ENCODE measurements at regions of chr7 and their contacts with region 1.

Region 1: DNA sequence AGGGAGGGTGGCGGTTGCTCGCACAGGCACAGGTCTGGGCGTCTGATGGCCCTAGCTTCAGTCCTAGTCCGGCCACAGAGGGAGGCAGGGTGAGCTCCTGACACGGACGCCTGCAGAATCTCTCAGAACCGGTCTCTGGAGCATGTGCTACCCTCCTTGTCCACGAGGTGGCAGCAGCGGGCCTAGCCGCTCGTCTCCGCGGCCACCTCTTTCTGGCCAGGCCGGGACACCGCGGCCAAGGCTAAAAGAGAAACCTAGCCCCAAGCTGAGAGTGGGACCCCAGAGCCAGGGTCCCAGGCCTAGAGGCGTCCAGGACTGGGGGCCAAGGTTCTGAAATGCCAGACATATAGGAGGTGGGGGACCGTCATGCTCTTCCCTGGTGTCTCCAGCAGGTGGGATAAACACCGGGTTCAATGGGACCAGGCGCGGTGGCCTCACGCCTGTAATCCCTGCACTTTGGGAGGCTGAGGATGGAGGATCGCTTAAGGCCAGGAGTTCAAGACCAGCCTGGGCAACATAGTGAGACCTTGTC is 3.2 kb upstream of the LAT2 start:
- DNase-seq: peak; percentile 46 to 91
- H3K4me3 ChIP-seq: no peak overlapping the region
- H3K27ac ChIP-seq: no peak overlapping the region
- H3K4me1 ChIP-seq: peaks cover 14% of the 10 kb centered on the region
- H3K27me3 ChIP-seq: no peaks in the 10 kb centered on the region
- CTCF ChIP-seq: peak; percentile 97

Region 2: GRCh38 chr7:73865738-73866445 is 340.8 kb before region 1 on chr7:
- CTCF ChIA-PET with region 1: interaction called, 22 read pairs
- POLR2A ChIA-PET with region 1: no interaction called
- intact Hi-C with region 1: loop called (anchors 5 kb)
- DNase-seq: peak in 1 of 2 experiments; percentile 57
- H3K4me3 ChIP-seq: no peak overlapping the region
- H3K27ac ChIP-seq: no peak overlapping the region
- H3K4me1 ChIP-seq: no peaks in the 10 kb centered on the region
- H3K27me3 ChIP-seq: no peaks in the 10 kb centered on the region
- CTCF ChIP-seq: peak; percentile 78

Region 3: DNA sequence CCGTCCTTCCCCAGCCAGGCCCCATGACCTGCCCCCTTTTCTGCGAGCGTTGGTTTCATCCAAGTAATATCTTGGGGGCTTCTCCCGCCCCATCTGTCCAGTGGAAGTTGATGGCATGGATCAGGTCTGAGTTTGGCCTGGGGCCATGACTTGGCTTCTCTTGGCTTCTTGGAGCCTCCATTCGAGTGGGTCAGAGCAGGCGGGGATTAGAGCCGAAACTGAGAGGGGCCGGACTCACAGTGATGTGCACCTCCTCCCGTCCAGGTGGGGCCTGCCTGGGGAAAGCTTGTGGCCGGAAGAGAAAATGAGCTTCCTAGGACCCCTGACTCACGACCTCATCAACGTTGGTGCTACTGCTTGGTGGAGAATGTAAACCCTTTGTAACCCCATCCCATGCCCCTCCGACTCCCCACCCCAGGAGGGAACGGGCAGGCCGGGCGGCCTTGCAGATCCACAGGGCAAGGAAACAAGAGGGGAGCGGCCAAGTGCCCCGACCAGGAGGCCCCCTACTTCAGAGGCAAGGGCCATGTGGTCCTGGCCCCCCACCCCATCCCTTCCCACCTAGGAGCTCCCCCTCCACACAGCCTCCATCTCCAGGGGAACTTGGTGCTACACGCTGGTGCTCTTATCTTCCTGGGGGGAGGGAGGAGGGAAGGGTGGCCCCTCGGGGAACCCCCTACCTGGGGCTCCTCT is 138.1 kb before region 1 on chr7:
- CTCF ChIA-PET with region 1: interaction called, 7 read pairs
- POLR2A ChIA-PET with region 1: no interaction called
- intact Hi-C with region 1: loop called (anchors 1 kb)
- DNase-seq: no peak
- H3K4me3 ChIP-seq: no peak overlapping the region
- H3K27ac ChIP-seq: no peak overlapping the region
- H3K4me1 ChIP-seq: no peaks in the 10 kb centered on the region
- H3K27me3 ChIP-seq: no peaks in the 10 kb centered on the region
- CTCF ChIP-seq: no peak

Region 4: DNA sequence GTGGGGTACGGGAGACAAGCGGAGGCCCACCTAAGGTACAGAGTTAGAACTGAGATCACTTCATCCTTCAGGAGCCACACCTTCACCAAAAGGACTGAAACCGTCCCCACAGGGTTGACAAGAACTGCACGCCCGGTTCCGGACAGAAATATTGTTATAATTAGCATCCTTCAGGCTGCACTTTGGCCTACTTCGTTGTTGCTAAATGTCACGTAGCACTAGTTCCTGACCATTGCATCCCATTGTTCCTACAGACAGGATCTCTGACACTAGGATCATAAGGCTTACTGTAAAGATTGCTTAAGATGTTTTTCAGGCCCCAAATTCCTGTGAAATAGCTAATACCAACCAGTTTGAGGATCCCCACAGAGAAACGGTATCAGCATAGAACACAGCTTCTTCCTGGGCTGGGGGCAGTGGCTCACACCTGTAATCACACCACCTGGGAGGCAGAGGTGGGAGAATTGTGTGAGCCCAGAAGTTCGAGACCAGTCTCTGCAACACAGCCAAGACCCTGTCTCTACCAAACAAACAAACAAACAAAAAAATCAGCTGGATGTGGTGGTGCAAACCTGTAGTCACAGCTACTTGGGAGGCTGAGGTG is 50.8 kb before region 1 on chr7:
- CTCF ChIA-PET with region 1: no interaction called
- POLR2A ChIA-PET with region 1: no interaction called
- intact Hi-C with region 1: no loop called
- DNase-seq: no peak
- H3K4me3 ChIP-seq: no peak overlapping the region
- H3K27ac ChIP-seq: peak overlapping the region; percentile 57
- H3K4me1 ChIP-seq: peaks cover 20% of the 10 kb centered on the region
- H3K27me3 ChIP-seq: no peaks in the 10 kb centered on the region
- CTCF ChIP-seq: no peak

Region 5: GRCh38 chr7:74254129-74254857 is 47.6 kb after region 1 on chr7 and contains the start of gene RFC2:
- CTCF ChIA-PET with region 1: interaction called, 3 read pairs
- POLR2A ChIA-PET with region 1: no interaction called
- intact Hi-C with region 1: loop called (anchors 2 kb)
- DNase-seq: peak; percentile 88 to 99
- H3K4me3 ChIP-seq: peak within 1 kb of the TSS; percentile 92
- H3K27ac ChIP-seq: peak within 1 kb of the TSS; percentile 67
- H3K4me1 ChIP-seq: peaks cover 17% of the 10 kb centered on the region
- H3K27me3 ChIP-seq: no peaks in the 10 kb centered on the region
- CTCF ChIP-seq: no peak
- total RNA-seq, gene RFC2: 65.5 and 75.7 TPM in 2 replicates

Region 6: GRCh38 chr7:74306730-74307469 is 100.2 kb after region 1 on chr7:
- CTCF ChIA-PET with region 1: interaction called, 10 read pairs
- POLR2A ChIA-PET with region 1: no interaction called
- intact Hi-C with region 1: no loop called
- DNase-seq: no peak
- H3K4me3 ChIP-seq: no peak overlapping the region
- H3K27ac ChIP-seq: no peak overlapping the region
- H3K4me1 ChIP-seq: peaks cover 23% of the 10 kb centered on the region
- H3K27me3 ChIP-seq: no peaks in the 10 kb centered on the region
- CTCF ChIP-seq: no peak

Region 7: GRCh38 chr7:74387606-74388005 is 181.0 kb after region 1 on chr7:
- CTCF ChIA-PET with region 1: no interaction called
- POLR2A ChIA-PET with region 1: no interaction called
- intact Hi-C with region 1: no loop called
- DNase-seq: no peak
- H3K4me3 ChIP-seq: no peak overlapping the region
- H3K27ac ChIP-seq: no peak overlapping the region
- H3K4me1 ChIP-seq: no peaks in the 10 kb centered on the region
- H3K27me3 ChIP-seq: no peaks in the 10 kb centered on the region
- CTCF ChIP-seq: no peak

Measured in PC-9 (cell line).